ENCODE measurements at regions of chr3 and their contacts with region 1.

Region 1: DNA sequence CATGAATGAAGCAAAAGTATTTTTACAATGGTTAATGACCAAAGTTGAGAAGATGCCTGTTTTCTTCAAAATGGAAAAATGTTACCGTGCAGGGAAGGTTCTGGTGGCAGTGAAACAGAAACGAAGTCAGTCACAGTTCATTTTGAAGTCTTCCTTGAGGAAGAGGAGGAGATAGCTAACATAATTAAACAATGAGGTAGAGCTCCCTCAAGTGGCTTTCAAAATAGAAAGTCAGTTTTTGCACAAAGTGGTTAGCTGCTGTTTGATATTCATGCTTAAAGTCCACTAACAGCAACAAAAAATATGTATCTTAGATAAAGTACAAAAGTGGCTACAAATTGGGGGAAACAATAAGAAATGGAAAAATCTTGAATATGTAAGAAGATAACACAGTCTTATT is 87.3 kb downstream of the TFG start:
- DNase-seq: no peak
- H3K4me3 Mint-ChIP-seq: no peak overlapping the region
- H3K27ac Mint-ChIP-seq: no peak overlapping the region
- H3K4me1 Mint-ChIP-seq: peaks cover 4% of the 10 kb centered on the region
- H3K27me3 Mint-ChIP-seq: no peaks in the 10 kb centered on the region

Region 2: GRCh38 chr3:100316641-100317069 is 479.9 kb before region 1 on chr3:
- CTCF ChIA-PET with region 1: no interaction called
- POLR2A ChIA-PET with region 1: no interaction called
- intact Hi-C with region 1: loop called (anchors 5 kb)
- DNase-seq: peak; percentile 36
- H3K4me3 Mint-ChIP-seq: no peak overlapping the region
- H3K27ac Mint-ChIP-seq: no peak overlapping the region
- H3K4me1 Mint-ChIP-seq: peaks cover 8% of the 10 kb centered on the region
- H3K27me3 Mint-ChIP-seq: no peaks in the 10 kb centered on the region

Region 3: DNA sequence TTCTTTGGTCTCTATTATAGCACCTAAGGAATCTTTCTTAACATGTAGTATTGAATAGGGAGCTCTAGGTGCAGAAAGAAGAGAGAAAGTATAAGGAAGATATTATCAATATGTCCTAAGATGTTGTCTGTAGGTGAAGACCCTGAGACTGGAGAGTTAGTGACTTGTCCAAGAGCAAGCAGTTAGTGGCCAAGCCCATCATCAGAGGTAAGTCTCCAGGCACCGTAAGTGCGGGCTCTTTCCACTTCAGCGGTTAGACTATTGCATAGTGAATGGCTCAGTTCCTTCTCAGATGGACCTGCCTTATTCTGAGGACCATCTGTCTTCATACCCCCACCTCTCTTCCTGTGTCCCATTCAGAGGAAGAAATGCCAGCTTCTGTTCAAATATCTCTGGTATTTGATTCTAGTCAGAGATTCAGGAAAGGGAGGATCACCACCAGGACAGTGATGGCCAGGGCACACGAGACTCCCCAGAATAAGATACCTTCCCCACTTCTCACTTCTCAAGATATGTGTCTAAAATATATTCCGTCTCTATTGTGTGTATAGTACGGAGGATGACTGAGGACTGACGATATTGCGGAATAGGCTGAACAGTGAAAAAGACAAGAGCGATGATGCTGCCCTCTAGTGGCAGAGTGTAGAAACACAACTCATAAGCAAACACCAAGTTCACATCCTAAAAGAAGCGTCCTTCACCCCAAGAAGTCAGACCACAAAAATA is 206.3 kb before region 1 on chr3:
- CTCF ChIA-PET with region 1: no interaction called
- POLR2A ChIA-PET with region 1: no interaction called
- intact Hi-C with region 1: loop called (anchors 5 kb)
- DNase-seq: peak; percentile 66
- H3K4me3 Mint-ChIP-seq: no peak overlapping the region
- H3K27ac Mint-ChIP-seq: no peak overlapping the region
- H3K4me1 Mint-ChIP-seq: peaks cover 6% of the 10 kb centered on the region
- H3K27me3 Mint-ChIP-seq: peaks cover 4% of the 10 kb centered on the region

Region 4: GRCh38 chr3:100650651-100651611 is 145.6 kb before region 1 on chr3:
- CTCF ChIA-PET with region 1: no interaction called
- POLR2A ChIA-PET with region 1: interaction called, 3 read pairs
- intact Hi-C with region 1: loop called (anchors 1 kb)
- DNase-seq: peak; percentile 36
- H3K4me3 Mint-ChIP-seq: peak overlapping the region; percentile 18
- H3K27ac Mint-ChIP-seq: peak overlapping the region; percentile 41
- H3K4me1 Mint-ChIP-seq: peaks cover 15% of the 10 kb centered on the region
- H3K27me3 Mint-ChIP-seq: no peaks in the 10 kb centered on the region